HepG2 (cell line): ENCODE measurements at regions of chr1 and their contacts with region 1.

Region 1: DNA sequence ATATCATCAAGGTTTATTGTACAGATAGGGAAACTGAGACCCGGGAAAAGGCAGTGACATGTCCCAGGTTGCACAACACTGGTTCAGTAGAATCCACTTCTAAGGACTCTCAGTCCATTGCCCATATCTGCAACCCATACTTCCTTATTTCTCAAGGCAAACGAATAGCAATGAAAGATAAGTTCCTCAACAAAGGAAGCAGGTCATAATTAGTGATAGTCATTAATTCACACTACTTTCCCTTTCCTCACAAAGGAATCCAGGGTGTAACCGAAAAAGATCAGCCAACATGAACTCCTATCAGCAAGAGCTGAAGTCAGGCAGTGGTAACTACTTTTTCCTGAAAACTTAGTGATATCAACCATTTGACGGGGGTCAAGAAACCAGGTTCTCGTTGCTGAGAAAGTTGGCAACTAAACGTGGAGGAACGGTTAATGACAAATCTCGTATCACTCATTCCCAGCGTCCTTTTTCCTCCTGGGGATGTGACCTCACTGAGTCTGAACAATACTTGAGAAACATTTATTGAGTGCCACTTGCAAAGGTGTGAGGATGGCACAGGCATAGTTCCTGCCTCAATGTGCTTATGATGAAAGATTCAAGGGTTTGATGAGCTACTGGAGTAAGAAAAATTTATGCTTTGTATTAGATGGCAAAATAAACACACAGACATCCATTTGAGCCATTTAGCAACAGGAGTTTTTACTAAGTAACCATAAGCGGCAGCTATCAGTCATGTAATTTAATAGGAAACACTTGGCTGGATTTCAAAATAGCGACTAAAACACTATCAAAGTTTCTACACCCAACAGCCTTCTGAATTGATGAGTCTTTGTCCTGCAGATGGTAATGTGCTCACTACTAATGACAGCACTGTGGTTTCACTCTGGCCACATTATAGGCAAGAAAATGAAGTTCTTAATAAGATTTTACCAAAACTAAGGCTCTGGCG is 82.3 kb downstream of the PLPP3 start:
- DNase-seq: no peak
- ATAC-seq: no peak
- H3K4me3 ChIP-seq: no peak overlapping the region
- H3K27ac ChIP-seq: peak overlapping the region; percentile 90
- H3K4me1 ChIP-seq: peaks cover 95% of the 10 kb centered on the region
- H3K27me3 ChIP-seq: no peaks in the 10 kb centered on the region
- CTCF ChIP-seq: no peak
- EP300 ChIP-seq: no peak
- POLR2A ChIP-seq: no peak
- RAD21 ChIP-seq: no peak

Region 2: DNA sequence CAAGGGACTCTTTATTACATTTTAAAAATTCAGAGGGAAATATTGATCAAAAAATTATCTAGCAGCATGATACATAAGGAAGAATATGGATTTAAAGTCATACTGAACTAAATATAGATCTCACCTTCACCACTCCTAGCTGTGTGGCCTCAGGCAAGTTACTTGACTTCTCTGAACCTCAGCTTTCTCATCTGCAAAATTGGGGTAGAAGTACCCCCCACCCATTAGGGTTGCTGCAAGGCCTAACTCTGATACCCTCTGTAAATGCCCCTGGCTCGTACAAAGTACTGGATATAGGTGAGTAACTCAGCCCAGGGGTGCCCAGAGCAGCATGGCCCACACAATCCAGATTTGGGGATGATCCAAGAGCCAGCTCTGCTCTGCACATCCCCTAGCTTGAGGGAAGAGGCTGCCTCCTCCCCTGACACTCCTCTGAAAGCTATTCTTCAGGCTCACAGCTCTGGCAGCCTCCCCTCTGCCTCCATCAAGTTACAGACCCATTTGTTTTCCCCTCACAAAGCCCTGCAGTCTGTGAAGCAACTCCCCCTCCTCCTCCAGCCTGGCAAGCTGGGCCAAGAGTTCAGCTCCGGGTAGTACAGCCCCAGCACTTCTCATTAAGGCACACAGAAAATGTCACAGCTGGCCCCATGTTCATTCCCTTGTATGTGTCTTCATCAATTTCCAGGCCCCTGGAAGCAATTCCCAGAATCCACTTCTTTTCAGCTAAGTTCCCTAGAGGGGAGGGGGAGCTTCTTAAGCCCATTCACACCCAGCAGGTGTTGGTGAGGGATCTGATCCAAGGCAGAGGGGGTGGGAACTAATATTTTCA is 61.4 kb before region 1 on chr1:
- CTCF ChIA-PET with region 1: no interaction called
- POLR2A ChIA-PET with region 1: interaction called, 11 read pairs
- in situ Hi-C with region 1: no loop called
- intact Hi-C with region 1: no loop called
- DNase-seq: peak; percentile 52
- ATAC-seq: peak; percentile 24
- H3K4me3 ChIP-seq: no peak overlapping the region
- H3K27ac ChIP-seq: peak overlapping the region; percentile 81
- H3K4me1 ChIP-seq: peaks cover 97% of the 10 kb centered on the region
- H3K27me3 ChIP-seq: no peaks in the 10 kb centered on the region
- CTCF ChIP-seq: no peak
- EP300 ChIP-seq: no peak
- POLR2A ChIP-seq: no peak
- RAD21 ChIP-seq: no peak

Region 3: DNA sequence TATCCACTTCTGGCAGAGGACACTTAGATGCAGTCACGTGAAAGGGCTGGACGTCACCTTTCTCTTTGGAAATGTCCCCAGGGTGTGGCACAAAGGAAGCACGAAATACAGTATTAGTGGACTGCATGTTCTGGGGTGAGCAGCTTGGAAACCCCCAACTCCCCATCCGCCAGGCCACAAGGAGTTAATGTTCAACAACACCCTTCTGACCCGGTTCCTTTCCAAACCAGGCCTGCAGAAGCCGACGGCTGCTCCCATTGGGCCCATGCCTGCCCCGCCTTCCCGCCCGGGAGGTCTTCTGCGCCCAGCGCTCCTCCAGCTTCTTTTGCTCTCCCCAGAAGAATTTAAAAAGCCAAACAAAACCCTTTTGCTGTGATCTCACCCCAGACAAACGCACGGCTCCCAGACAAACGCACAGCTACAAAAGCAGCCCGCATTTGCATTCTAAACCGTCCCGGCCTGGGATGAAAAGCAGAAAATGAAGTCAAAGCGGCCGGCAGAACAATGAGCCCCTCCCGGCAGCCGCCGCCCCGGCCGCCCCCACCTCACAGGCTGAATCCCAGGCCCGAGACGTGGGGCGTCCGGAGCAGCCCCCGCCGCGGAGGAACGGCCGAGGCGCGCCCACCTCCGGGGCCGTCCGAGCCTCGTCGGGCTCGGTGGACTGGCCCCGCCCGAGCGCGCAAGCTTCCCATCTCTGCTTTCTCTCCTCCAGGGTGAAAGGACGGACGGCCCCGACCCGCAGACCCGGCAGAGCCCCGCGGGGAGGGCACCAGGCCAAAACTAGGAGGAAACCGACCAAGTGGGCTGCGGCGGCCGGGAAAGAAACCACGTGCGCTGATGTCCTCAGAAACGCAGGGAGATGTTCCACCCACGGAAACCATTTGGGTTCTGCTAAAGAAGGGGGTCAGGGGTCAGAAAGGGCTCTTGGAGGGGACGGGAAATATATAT is 19.7 kb before region 1 on chr1:
- CTCF ChIA-PET with region 1: no interaction called
- POLR2A ChIA-PET with region 1: interaction called, 26 read pairs
- in situ Hi-C with region 1: no loop called
- intact Hi-C with region 1: loop called (anchors 1 kb)
- DNase-seq: peak; percentile 85
- ATAC-seq: peak; percentile 90
- H3K4me3 ChIP-seq: peak overlapping the region; percentile 64 to 77 (median 68)
- H3K27ac ChIP-seq: peak overlapping the region; percentile 95
- H3K4me1 ChIP-seq: peaks cover 82% of the 10 kb centered on the region
- H3K27me3 ChIP-seq: no peaks in the 10 kb centered on the region
- CTCF ChIP-seq: no peak
- EP300 ChIP-seq: peak in 1 of 2 experiments; percentile 54; a peak in 2 of 4 replicates
- POLR2A ChIP-seq: peak; percentile 44 to 73; a peak in 2 of 4 replicates
- RAD21 ChIP-seq: no peak; the same call in none of the 2 replicates

Region 4: DNA sequence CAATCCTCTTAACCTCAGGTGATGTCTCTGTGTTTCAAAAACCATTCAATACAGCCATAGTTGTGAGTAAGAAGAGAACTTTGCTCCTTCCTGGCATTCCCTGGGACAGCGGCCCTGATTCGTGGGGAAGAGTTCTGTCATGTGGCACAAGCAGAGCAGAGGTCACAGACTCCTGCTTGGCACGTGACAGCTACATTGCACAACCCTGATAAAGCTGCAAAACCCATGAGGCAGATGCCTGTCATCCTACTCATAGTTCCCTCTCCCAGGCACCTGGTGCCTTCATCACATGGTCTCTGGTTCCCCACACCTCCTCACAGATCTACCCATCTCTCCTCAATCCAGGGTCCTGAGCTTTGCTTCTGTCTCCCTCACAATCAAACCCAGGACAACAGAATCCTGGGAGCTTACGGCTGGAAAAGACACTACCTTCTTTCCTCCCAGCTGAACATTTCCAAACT is 11.5 kb after region 1 on chr1:
- CTCF ChIA-PET with region 1: no interaction called
- POLR2A ChIA-PET with region 1: interaction called, 74 read pairs
- in situ Hi-C with region 1: no loop called
- intact Hi-C with region 1: loop called (anchors 2 kb)
- DNase-seq: peak; percentile 98
- ATAC-seq: peak; percentile 91
- H3K4me3 ChIP-seq: no peak overlapping the region
- H3K27ac ChIP-seq: peak overlapping the region; percentile 93
- H3K4me1 ChIP-seq: peaks cover 89% of the 10 kb centered on the region
- H3K27me3 ChIP-seq: no peaks in the 10 kb centered on the region
- CTCF ChIP-seq: peak; percentile 20; the same call in 1 of the 2 replicates
- EP300 ChIP-seq: peak; percentile 60 to 95; a peak in 3 of 4 replicates
- POLR2A ChIP-seq: peak in 1 of 2 experiments; percentile 43; a peak in 1 of 4 replicates
- RAD21 ChIP-seq: peak; percentile 74

Region 5: GRCh38 chr1:57112148-57112547 is 615.1 kb after region 1 on chr1:
- CTCF ChIA-PET with region 1: no interaction called
- POLR2A ChIA-PET with region 1: no interaction called
- in situ Hi-C with region 1: no loop called
- intact Hi-C with region 1: no loop called
- DNase-seq: no peak
- ATAC-seq: no peak; the same call in 2 of the 3 replicates
- H3K4me3 ChIP-seq: no peak overlapping the region
- H3K27ac ChIP-seq: no peak overlapping the region
- H3K4me1 ChIP-seq: no peaks in the 10 kb centered on the region
- H3K27me3 ChIP-seq: no peaks in the 10 kb centered on the region; a peak in 2 of 5 replicates
- CTCF ChIP-seq: no peak
- EP300 ChIP-seq: no peak
- POLR2A ChIP-seq: no peak
- RAD21 ChIP-seq: no peak